ENCODE measurements at regions of chr10 and their contacts with region 1.

Region 1: DNA sequence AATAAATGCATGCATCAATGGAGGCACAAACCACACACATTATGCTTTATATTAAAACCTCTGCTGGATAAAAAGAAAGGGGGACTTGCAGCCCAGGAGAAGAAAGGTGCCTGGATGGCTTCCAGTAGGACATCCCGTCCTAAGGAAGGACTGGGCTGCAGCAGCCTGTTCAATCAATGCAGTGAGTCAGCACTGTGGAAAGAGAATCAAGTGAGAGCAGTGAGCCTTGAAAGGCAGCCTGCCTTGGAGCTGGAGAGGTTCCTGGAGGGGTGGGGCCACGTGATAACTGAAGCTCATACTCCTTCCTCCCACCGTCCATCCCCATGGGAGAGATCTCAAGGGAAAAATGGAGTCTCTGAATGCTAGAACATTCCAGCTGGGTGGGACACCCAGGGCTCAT is 501.2 kb downstream of the ADRA2A start:
- DNase-seq: no peak
- ATAC-seq: no peak
- H3K4me3 ChIP-seq: no peak overlapping the region
- H3K4me3 Mint-ChIP-seq: no peak overlapping the region
- H3K27ac ChIP-seq: no peak overlapping the region
- H3K27ac Mint-ChIP-seq: no peak overlapping the region
- H3K4me1 ChIP-seq: no peaks in the 10 kb centered on the region
- H3K4me1 Mint-ChIP-seq: no peaks in the 10 kb centered on the region
- H3K27me3 ChIP-seq: no peaks in the 10 kb centered on the region
- H3K27me3 Mint-ChIP-seq: no peaks in the 10 kb centered on the region
- CTCF ChIP-seq: no peak

Region 2: GRCh38 chr10:111560027-111560426 is 18.0 kb before region 1 on chr10:
- intact Hi-C with region 1: no loop called
- DNase-seq: no peak
- ATAC-seq: no peak
- H3K4me3 ChIP-seq: no peak overlapping the region
- H3K4me3 Mint-ChIP-seq: no peak overlapping the region
- H3K27ac ChIP-seq: no peak overlapping the region
- H3K27ac Mint-ChIP-seq: no peak overlapping the region
- H3K4me1 ChIP-seq: no peaks in the 10 kb centered on the region
- H3K4me1 Mint-ChIP-seq: no peaks in the 10 kb centered on the region
- H3K27me3 ChIP-seq: no peaks in the 10 kb centered on the region
- H3K27me3 Mint-ChIP-seq: no peaks in the 10 kb centered on the region
- CTCF ChIP-seq: no peak

Region 3: DNA sequence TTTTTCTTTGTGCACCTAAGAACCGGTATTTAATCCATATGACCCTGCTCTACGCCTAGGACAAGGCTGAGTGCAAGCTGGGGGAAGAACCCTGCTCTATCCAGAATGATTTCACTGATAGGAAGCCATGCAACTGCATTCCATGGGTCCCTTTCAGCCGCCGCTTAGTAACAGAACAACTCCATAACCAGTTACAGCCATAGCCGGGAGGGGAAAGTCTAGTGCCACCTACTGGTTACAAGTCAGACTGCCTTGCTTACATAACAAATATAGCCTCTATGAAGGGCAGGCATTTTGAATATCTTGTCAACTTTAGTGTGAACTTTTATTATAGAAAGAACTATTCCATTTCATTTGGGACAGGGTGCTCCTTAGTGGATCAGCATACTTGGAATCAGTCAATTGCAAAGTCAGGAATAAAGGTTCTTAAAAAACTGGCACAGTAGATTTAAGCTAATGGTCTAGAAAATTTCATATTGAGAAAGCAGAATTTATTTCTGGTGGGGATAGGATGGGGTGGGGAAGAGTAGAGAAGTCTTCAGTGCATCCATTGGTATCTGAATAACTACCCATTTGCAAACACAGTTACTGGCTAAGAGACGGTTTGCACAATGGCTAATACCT is 20.5 kb after region 1 on chr10:
- intact Hi-C with region 1: loop called (anchors 2 kb)
- DNase-seq: peak in 1 of 2 donors; percentile 67
- ATAC-seq: peak in 2 of 3 donors; percentile 54 to 61
- H3K4me3 ChIP-seq: no peak overlapping the region
- H3K4me3 Mint-ChIP-seq: no peak overlapping the region
- H3K27ac ChIP-seq: no peak overlapping the region
- H3K27ac Mint-ChIP-seq: no peak overlapping the region
- H3K4me1 ChIP-seq: no peaks in the 10 kb centered on the region
- H3K4me1 Mint-ChIP-seq: no peaks in the 10 kb centered on the region
- H3K27me3 ChIP-seq: no peaks in the 10 kb centered on the region
- H3K27me3 Mint-ChIP-seq: peaks cover 0 to 3% of the 10 kb centered on the region in 2 donors
- CTCF ChIP-seq: peak; percentile 49